ENCODE measurements at regions of chr16 and their contacts with region 1.

Region 1: DNA sequence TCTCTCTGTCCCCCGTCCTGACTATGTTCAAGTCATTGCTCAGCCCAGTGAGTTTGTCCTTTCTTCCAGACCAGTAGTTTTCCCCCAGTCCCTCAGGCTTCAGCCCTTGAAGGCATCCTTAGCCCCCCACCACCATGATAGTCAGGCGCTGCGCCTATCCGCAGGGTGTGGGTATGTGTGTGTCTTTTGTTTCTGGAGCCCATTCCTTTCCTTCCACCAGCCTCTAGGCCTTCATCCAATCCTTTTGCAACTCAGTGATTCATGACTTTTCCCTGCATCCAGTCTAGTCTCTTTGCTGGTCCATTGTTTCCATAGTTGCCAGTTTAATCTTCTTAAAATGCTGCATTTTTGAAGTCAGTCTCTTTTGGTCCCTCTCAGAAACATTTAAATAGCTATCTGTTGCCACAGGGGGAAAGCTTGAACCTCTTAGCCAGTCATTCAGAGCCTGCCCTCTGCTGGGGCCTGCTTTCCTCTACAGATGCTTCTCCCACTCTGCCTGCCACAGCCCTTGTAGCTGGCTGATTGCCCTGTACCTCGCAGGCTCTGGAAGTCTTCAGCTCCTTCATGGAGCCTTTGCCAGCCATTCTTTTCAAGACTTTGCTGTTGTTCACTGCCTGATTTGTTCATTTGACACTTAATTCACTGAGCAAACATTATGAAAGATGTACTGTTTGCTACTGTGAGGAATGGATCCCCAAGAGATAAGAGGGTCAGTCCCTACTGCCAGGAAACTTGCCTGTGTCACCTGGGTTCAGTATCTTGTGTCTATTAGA is 55.9 kb upstream of the ADCY7 start:
- DNase-seq: peak; percentile 88
- H3K4me3 ChIP-seq: no peak overlapping the region
- H3K27ac ChIP-seq: peak overlapping the region; percentile 8
- H3K4me1 ChIP-seq: peaks cover 22% of the 10 kb centered on the region
- H3K27me3 ChIP-seq: no peaks in the 10 kb centered on the region
- CTCF ChIP-seq: peak; percentile 85

Region 2: DNA sequence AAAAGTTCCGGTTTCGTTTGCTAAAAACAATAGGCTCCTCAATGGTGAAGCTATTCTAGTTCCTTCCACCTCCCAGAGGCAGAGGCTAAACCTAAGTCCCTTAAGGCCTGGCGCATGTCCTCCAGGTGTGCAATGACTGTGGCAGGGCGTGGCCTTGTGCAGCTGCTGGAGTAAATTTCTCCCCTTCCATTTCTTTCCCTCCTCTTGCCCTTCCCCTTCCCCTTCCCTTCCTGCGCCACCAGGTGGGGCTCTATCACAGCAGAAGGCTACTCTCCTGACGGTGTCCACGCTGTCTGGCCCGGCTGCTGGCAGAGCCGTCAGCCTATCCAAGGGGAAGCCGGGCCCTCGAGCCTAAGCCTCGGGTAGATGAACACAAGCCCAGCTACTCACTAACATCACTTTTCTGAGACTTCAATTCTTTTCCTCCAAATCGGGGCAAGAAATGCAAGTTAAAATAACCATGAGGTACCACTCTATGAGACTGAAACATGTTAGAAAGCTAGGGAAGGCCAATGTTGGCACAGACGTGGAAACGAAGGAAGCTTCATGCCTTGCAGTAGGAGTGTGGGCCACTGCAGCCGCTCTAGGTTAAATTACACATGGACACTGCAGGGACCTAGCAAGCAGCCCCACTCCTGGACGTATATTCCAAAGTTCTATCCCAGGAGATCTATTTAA is 802.4 kb before region 1 on chr16:
- CTCF ChIA-PET with region 1: no interaction called
- POLR2A ChIA-PET with region 1: no interaction called
- intact Hi-C with region 1: loop called (anchors 10 kb)
- DNase-seq: peak; percentile 87
- H3K4me3 ChIP-seq: no peak overlapping the region
- H3K27ac ChIP-seq: no peak overlapping the region
- H3K4me1 ChIP-seq: no peaks in the 10 kb centered on the region
- H3K27me3 ChIP-seq: no peaks in the 10 kb centered on the region
- CTCF ChIP-seq: peak; percentile 89

Region 3: DNA sequence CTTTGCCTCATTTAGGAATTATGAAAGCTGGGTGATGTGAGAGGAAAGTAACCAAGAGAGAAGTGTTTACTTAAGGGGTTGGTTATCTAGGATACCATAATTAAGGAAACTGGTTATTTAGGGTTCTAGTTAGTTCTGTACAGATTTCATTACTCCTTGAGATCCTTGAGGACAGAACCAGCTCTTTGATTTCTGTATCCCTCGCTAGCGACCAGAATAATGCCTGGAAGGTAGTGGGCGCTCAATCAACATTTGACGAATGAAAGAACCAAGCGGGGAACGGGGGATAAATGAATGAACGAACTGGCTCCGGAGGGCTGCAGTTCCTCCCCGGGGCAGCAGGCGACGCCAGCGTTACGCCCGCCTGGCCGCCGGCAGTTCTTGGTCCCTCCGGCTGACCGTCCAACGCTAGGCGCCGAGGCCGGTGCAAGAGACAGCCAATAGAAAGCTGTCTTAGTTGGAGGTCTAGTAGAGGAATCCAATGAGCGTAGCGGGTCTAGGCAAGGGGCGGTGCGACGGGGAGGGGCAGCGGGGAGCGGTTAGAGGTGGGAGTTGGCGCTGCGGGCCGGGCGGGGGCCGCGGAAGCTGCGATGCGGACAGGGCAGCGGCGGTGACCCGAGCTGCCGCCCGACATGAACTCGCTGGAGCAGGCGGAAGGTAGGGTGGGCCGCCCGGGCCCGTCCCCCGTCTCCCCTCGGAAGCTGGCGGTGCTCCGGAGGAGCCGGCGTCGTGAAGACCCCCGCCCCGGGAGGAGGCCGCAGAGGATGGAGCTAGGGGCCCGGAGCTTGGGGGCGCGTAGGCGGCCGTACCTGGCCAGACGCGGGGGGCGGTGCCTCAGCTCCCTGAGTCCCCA is 185.5 kb before region 1 on chr16 and contains the start of gene CNEP1R1:
- CTCF ChIA-PET with region 1: interaction called, 46 read pairs
- POLR2A ChIA-PET with region 1: no interaction called
- intact Hi-C with region 1: loop called (anchors 1 kb)
- DNase-seq: peak; percentile 97
- H3K4me3 ChIP-seq: peak within 1 kb of the TSS; percentile 91
- H3K27ac ChIP-seq: peak within 1 kb of the TSS; percentile 68
- H3K4me1 ChIP-seq: peaks cover 16% of the 10 kb centered on the region
- H3K27me3 ChIP-seq: no peaks in the 10 kb centered on the region
- CTCF ChIP-seq: peak; percentile 100
- total RNA-seq, gene CNEP1R1: 23.5 and 24.2 TPM in 2 replicates

Region 4: GRCh38 chr16:50065624-50066481 is 144.6 kb before region 1 on chr16 and contains the start of gene HEATR3:
- CTCF ChIA-PET with region 1: interaction called, 29 read pairs
- POLR2A ChIA-PET with region 1: no interaction called
- intact Hi-C with region 1: loop called (anchors 1 kb)
- DNase-seq: peak; percentile 94
- H3K4me3 ChIP-seq: peak within 1 kb of the TSS; percentile 78
- H3K27ac ChIP-seq: peak within 1 kb of the TSS; percentile 94
- H3K4me1 ChIP-seq: no peaks in the 10 kb centered on the region
- H3K27me3 ChIP-seq: no peaks in the 10 kb centered on the region
- CTCF ChIP-seq: no peak
- total RNA-seq, gene HEATR3: 29.4 and 41.8 TPM in 2 replicates

Region 5: DNA sequence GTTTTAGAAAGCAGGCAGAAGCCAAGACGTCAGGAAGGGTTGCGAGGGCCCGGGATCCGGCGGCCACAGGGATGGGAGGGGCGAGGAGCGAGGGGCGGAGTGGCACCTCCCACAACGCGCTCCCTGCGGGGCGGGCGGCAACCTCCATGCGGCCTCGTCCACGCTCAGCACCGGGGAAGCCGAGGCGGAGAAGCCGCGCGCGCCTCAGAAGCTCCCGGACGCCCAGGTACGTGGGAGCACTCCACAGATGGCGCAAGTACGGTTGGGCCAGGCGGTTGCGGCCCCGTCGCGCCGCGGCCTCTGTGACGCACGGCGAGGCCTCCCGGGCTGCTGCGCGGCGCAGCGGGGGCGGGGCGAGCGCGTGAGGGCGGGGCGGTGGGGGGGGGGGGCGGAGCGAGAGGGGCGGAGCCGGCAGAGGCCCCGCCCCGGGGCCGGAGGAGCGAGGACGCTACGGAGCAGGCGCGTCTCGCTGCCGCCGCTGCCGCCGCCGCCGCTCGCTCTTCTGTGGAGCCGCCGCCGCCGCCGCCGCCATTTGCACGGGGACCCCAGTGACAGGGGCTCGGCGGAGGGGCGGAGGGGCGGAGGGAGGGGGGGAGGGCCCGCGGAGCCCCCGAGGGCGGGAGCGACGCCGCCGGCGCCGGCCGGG is 57.5 kb before region 1 on chr16 and contains the start of gene TENT4B:
- CTCF ChIA-PET with region 1: interaction called, 4 read pairs
- POLR2A ChIA-PET with region 1: no interaction called
- intact Hi-C with region 1: loop called (anchors 5 kb)
- DNase-seq: peak; percentile 86
- H3K4me3 ChIP-seq: peak within 1 kb of the TSS; percentile 79
- H3K27ac ChIP-seq: peak within 1 kb of the TSS; percentile 97
- H3K4me1 ChIP-seq: peaks cover 17% of the 10 kb centered on the region
- H3K27me3 ChIP-seq: no peaks in the 10 kb centered on the region
- CTCF ChIP-seq: no peak
- total RNA-seq, gene TENT4B: 16.8 and 18.3 TPM in 2 replicates

Region 6: GRCh38 chr16:50354629-50355456 is 144.4 kb after region 1 on chr16:
- CTCF ChIA-PET with region 1: interaction called, 5 read pairs
- POLR2A ChIA-PET with region 1: no interaction called
- intact Hi-C with region 1: loop called (anchors 5 kb)
- DNase-seq: peak; percentile 42
- H3K4me3 ChIP-seq: no peak overlapping the region
- H3K27ac ChIP-seq: no peak overlapping the region
- H3K4me1 ChIP-seq: no peaks in the 10 kb centered on the region
- H3K27me3 ChIP-seq: no peaks in the 10 kb centered on the region
- CTCF ChIP-seq: peak; percentile 77

Region 7: DNA sequence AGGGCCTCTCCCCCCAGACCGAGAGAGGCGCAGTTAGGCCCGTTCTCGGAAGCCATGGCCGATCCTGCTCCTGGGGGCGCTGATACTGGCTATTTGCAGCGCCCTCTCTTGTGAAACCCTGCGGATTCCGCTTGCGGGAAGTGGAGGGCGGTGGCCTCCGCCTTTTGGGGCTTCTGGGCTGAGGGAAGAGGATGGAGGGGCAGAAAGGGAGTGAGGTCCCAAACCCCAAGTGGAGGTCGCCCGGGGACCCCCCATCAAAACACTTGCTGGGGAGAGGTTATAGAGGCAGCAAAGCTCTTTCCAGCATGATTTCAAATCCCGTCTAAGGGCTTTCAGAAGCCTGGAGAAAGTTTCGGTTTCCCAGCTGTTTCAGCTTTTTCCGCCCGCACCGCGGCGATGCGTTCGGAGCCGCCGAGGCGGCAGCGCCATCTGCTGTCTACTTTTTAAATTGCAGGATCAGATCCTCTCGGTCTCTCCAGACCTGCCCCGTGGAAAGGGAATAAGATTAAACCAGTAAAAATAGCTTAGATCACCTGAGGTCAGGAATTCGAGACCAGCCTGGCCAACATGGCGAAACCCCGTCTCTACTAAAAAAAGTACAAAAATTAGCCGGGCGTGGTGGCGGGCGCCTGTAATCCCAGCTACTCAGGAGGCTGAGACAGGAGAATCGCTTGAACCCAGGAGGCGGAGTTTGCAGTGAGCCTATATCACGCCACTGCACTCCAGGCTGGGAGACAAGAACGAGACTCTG is 454.9 kb after region 1 on chr16:
- CTCF ChIA-PET with region 1: no interaction called
- POLR2A ChIA-PET with region 1: no interaction called
- intact Hi-C with region 1: loop called (anchors 1 kb)
- DNase-seq: peak; percentile 73
- H3K4me3 ChIP-seq: peak overlapping the region; percentile 37
- H3K27ac ChIP-seq: no peak overlapping the region
- H3K4me1 ChIP-seq: no peaks in the 10 kb centered on the region
- H3K27me3 ChIP-seq: no peaks in the 10 kb centered on the region
- CTCF ChIP-seq: peak; percentile 79

Measured in A673 (cell line).